Cardiac septum (tissue), 1 donor: ENCODE measurements at regions of chr11 and their contacts with region 1.

Region 1: GRCh38 chr11:63212742-63213141 is 30.7 kb downstream of the SLC22A25 start:
- DNase-seq: no peak

Region 2: GRCh38 chr11:63032457-63032856 is 180.3 kb before region 1 on chr11:
- intact Hi-C with region 1: loop called (anchors 10 kb)
- DNase-seq: no peak

Region 3: GRCh38 chr11:63132985-63133775 is 79.6 kb before region 1 on chr11:
- intact Hi-C with region 1: loop called (anchors 10 kb)
- DNase-seq: no peak

Region 4: GRCh38 chr11:63369165-63369970 is 156.6 kb after region 1 on chr11 and contains the start of gene SLC22A9:
- intact Hi-C with region 1: no loop called
- DNase-seq: no peak
- total RNA-seq, gene SLC22A9: not detected